ENCODE measurements at regions of chr1 and their contacts with region 1.

Region 1: DNA sequence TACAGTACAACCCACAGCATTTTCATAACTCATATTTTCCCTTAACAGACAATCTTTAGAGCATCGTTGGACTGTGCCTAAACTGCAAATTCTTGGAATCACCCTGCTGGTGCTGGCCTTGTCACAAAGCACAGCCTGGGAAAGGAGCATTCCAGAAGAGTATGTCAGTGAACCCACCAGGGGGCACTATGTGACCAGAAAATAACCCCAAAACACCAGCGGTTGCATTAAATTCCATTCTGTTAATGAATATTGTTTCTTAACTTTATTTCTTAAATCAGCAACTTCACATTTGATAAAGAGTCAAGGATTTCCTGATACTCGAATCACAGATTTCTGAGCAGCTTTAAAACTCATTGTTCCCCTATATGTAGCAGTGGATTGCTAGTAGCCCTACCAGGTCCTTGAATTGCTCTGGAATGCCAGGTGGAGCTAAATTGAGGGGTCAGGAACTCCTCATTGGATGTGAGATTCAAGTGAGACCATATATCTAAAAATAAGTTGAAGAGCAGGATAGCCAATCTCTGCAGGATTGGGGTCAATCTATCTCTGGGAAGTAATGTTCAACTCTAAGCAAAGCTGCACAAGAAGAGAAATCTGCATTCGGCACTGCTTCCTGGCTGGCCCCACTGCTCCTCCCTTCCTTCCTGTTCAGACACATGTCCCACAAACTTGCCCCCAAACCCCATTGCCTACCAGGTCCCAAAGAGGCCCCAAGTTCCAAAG is 12.7 kb upstream of the RAB4A start:
- DNase-seq: peak in 1 of 2 donors; percentile 67
- ATAC-seq: peak; percentile 74 to 91 (median 86)
- H3K4me3 ChIP-seq: no peak overlapping the region
- H3K27ac ChIP-seq: no peak overlapping the region
- H3K4me1 ChIP-seq: peaks cover 0 to 20% (median 6%) of the 10 kb centered on the region in 9 donors
- H3K27me3 ChIP-seq: no peaks in the 10 kb centered on the region
- CTCF ChIP-seq: peak; percentile 62 to 90 (median 84)

Region 2: DNA sequence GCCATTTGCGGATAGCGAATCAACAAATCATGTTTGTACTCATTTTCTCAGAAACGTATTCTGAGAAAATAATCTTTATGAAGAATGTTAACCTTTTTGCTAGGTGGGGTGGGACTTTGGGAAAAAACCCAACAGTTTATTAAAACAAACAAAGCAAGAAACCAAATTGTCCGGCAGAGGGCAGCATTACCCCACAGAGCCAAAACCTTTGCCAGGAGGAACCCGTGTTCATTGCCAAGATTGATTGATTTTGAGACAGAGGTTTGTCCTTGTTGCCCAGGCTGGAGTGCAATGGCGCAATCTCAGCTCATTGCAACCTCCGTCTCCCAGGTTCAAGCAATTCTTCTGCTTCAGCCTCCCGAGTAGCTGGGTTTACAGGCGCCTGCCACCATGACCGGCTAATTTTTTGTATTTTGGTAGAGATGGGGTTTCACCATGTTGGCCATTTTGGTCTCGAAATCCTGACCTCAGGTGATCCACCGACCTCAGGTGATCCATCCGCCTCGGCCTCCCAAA is 593.7 kb before region 1 on chr1:
- intact Hi-C with region 1: loop called in 1 of 10 experiments (anchors 5 kb)
- DNase-seq: peak; percentile 62 to 75
- ATAC-seq: peak in 4 of 8 donors; percentile 33 to 55 (median 47)
- H3K4me3 ChIP-seq: no peak overlapping the region
- H3K27ac ChIP-seq: no peak overlapping the region
- H3K4me1 ChIP-seq: peaks cover 0 to 13% (median 3%) of the 10 kb centered on the region in 9 donors
- H3K27me3 ChIP-seq: peaks cover 0 to 10% (median 0%) of the 10 kb centered on the region in 7 donors
- CTCF ChIP-seq: peak; percentile 70 to 94 (median 84)

Region 3: DNA sequence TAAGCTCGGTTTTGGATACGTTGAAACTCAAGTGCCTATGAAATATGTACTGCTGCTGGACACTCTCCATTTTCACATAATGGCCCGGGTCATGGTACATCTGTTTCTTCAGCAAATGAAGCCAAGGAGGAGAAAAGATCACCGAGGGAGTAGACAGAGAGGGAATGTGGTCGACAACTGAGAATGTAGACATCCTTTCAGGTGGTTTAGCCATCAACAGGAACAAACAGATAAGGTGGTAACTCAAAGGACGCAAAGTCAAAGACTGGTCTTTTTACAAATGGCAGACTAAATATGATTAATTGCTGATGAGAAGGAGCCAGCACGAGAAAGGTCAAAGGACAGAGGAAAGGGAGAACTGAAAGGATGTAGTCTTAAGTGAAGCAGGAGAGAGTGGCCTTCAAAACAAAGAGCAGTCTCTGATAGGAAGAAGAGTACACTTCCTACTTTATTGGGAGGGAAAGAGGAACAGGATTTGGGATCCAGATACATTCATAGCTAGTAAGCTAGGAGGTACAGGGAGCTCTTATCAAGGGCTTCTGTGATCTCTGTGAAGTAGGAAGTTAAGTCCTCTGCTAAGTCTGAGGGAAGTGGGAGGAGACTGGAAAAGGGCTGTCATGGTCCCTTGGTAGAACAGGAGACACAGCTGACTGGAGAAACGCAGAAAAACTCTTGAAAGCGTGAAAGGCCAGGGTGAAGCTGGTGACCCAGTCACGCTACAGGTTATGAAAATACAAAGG is 221.6 kb after region 1 on chr1:
- intact Hi-C with region 1: loop called (anchors 1 to 5 kb)
- DNase-seq: no peak
- ATAC-seq: peak in 2 of 8 donors; percentile 39 to 48
- H3K4me3 ChIP-seq: no peak overlapping the region
- H3K27ac ChIP-seq: peak overlapping the region in 1 of 10 donors; percentile 9
- H3K4me1 ChIP-seq: peaks cover 0 to 12% (median 4%) of the 10 kb centered on the region in 9 donors
- H3K27me3 ChIP-seq: no peaks in the 10 kb centered on the region
- CTCF ChIP-seq: no peak

Region 4: GRCh38 chr1:229507951-229508822 is 250.0 kb after region 1 on chr1 and contains the start of gene NUP133:
- intact Hi-C with region 1: loop called in 5 of 10 experiments (anchors 5 to 10 kb)
- DNase-seq: peak; percentile 99
- ATAC-seq: peak; percentile 98 to 99 (median 99)
- H3K4me3 ChIP-seq: peak within 1 kb of the TSS; percentile 78 to 100 (median 97)
- H3K27ac ChIP-seq: peak within 1 kb of the TSS; percentile 76 to 98 (median 92)
- H3K4me1 ChIP-seq: peaks cover 3 to 26% (median 20%) of the 10 kb centered on the region in 9 donors
- H3K27me3 ChIP-seq: no peaks in the 10 kb centered on the region
- CTCF ChIP-seq: no peak
- total RNA-seq, gene NUP133: 28.1 to 36.3 (median 31.4) TPM

Region 5: DNA sequence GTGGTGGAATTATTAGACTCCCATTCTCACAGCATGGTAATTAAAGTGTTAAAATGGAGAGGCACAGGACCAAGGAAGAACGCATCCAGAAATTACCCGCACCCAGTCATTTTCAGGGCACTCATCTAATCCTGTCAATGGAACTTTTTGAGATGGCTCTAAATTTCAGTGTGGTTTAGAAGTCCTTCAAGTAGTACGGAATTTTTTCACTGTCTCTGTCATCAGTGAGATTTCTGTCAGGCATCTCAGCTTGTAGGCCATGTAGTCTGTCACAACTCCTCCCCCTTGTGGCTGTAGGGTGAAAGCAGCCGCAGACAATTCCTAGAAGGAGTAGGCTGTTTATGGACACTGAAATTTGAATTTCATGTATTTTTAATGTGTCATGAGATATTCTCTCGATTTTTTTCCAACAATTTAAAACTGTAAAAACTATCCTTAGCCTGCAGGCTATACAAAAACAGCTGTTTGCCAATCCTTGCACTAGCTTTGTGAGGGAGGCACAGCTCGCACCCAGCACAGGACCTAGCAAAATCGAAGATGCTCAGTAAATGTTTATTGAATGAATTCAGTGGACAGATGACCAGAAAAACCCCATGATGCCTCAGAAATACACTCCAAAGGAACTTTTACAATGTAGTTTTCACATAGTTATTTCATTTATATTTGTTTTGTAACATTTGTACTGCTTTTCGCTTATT is 256.5 kb after region 1 on chr1:
- intact Hi-C with region 1: loop called in 7 of 10 experiments (anchors 1 to 10 kb)
- DNase-seq: peak; percentile 18 to 72
- ATAC-seq: peak in 7 of 8 donors; percentile 73 to 86 (median 82)
- H3K4me3 ChIP-seq: no peak overlapping the region
- H3K27ac ChIP-seq: no peak overlapping the region
- H3K4me1 ChIP-seq: peaks cover 0 to 5% (median 0%) of the 10 kb centered on the region in 9 donors
- H3K27me3 ChIP-seq: no peaks in the 10 kb centered on the region
- CTCF ChIP-seq: peak; percentile 57 to 88 (median 83)

Region 6: DNA sequence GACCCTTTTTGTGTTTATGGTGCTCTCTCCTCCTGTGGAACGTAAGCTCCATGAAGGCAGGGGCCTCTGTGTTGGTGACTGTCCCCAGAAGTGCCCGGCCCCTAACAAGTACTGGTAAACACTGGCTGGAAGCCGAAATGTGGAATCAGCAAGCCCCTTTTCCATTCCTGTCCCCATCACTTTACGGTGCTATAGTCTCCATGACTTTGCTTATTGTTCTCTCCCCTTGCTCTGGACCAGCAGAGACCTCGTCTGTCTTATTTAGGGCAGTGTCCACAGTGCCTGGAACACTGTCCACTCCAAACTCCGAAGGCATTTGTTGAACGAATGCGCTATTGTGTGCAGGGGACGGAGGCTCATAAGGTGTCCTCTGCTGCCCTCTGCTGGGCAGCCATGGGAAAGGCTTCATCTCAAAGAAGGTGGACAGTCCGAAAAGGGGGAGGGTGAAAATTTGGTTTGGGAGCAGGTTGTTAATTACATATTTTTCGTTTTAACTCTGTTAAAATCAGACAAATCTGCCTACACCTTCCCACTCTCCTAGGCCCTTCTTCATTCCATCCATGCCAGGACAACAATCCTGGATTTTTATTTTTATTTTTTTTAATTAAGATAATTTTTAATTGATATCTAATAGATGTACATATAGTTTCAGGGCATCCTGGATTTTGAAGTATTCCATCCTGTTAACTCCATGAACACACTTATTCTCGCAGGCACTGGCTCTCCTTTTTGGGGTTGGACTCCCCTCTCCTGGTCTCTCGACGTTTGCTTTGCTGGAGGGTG is 1052.4 kb after region 1 on chr1:
- intact Hi-C with region 1: loop called in 1 of 10 experiments (anchors 10 kb)
- DNase-seq: peak; percentile 72 to 74
- ATAC-seq: peak; percentile 82 to 94 (median 89)
- H3K4me3 ChIP-seq: no peak overlapping the region
- H3K27ac ChIP-seq: no peak overlapping the region
- H3K4me1 ChIP-seq: peaks cover 0 to 19% (median 8%) of the 10 kb centered on the region in 9 donors
- H3K27me3 ChIP-seq: peaks cover 0 to 18% (median 0%) of the 10 kb centered on the region in 7 donors
- CTCF ChIP-seq: peak; percentile 87 to 97 (median 95)

Measured in heart right ventricle (tissue), 16 donors.